ENCODE measurements at regions of chr14 and their contacts with region 1.

Region 1: GRCh38 chr14:76784266-76785264 is 23.3 kb downstream of the VASH1 start:
- DNase-seq: peak; percentile 94

Region 2: DNA sequence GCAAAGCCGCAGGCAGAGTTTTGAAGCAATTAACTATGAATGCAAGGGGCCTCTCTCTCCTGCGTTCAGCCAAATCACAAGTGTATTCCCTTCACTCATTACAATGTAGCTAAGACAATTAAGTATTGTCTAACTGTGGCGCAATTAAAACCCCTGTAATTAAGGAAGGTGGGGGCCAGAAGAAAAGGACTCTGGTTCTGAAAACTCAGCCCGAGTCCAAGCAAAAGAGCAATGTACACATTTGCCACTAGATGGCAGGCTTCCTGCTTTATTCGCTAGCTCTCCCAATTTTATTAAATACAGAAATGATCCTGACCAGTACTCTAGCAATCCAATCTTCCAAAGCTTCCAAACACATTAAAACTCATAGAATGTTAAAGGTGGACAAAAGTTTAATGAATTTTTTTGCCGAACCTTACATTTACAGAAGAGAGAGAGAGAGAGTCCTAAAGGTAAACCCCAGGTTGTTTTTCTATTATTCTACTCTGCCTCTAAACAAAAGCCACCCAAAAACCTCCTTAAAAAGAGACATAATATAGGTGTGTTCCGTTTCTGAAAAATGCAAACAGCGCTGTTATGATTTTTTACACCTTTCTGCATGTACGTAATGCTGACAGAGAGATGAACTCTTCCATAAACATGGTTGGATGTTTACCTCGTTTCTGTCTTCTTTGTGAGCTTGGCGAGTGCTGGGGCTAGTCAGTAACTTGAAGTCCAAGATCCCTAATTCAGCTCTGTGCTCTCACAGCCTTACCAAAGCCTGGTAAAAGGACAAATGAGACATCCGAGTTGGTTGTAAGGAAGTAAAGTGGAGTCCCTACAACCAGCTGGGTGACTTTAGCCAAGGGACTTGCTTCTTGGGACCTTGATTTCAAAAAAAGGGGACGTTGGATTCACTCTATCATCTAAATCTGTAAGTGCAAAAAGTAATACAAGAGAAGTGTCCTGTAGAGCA is 74.2 kb before region 1 on chr14:
- in situ Hi-C with region 1: loop called (anchors 10 kb)
- DNase-seq: peak; percentile 60